Left ventricle myocardium inferior (tissue), 1 donor: ENCODE measurements at regions of chr14 and their contacts with region 1.

Region 1: DNA sequence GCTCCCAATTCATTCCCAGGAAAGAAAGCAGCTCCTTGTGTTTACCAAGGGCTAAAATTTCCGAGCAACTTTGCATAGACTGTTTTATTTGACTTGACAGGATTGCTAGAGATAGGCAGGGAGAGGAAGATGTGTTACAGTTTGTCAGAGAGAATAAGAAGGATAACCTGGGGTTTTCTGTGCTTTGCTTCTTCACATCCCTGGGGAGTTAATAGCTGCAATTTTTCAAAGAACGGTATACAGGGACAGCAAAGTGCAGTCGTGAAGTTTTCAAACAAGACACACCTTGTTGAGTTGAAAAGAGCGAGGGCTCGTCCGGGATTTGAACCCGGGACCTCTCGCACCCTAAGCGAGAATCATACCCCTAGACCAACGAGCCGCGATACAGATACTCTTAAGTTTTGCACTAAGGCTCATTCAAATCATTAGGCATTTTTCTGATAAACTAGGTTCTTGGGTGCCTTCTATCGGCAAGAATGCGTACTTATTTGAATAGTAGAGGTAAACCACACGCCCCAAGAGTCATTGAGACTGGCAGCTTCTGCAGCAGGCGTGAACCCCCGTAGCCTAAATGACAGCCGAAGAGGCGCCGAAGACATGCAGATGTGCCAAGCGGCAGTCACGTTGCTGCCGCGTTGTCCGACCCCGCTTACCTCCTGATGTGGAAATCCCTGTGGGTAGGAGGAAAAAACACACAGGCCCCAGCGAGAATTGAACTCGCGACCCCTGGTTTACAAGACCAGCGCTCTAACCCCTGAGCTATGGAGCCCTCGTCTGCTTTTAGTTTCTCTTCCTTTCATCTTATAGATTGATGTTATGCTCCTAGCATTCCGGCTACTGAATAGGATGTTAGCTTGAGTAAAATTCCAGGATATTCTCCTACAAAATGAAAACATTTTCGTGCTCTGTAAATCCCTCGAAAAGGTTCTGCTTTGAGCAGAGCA is 22.2 kb upstream of the RNASE12 start:
- DNase-seq: peak; percentile 67
- H3K4me3 ChIP-seq: peak overlapping the region; percentile 69
- H3K27ac ChIP-seq: peak overlapping the region; percentile 78
- H3K4me1 ChIP-seq: peaks cover 42% of the 10 kb centered on the region
- H3K27me3 ChIP-seq: no peaks in the 10 kb centered on the region
- CTCF ChIP-seq: peak; percentile 76

Region 2: GRCh38 chr14:20327005-20327869 is 286.1 kb before region 1 on chr14:
- intact Hi-C with region 1: loop called (anchors 5 kb)
- DNase-seq: no peak
- H3K4me3 ChIP-seq: no peak overlapping the region
- H3K27ac ChIP-seq: peak overlapping the region; percentile 30
- H3K4me1 ChIP-seq: peaks cover 42% of the 10 kb centered on the region
- H3K27me3 ChIP-seq: no peaks in the 10 kb centered on the region
- CTCF ChIP-seq: peak; percentile 84

Region 3: DNA sequence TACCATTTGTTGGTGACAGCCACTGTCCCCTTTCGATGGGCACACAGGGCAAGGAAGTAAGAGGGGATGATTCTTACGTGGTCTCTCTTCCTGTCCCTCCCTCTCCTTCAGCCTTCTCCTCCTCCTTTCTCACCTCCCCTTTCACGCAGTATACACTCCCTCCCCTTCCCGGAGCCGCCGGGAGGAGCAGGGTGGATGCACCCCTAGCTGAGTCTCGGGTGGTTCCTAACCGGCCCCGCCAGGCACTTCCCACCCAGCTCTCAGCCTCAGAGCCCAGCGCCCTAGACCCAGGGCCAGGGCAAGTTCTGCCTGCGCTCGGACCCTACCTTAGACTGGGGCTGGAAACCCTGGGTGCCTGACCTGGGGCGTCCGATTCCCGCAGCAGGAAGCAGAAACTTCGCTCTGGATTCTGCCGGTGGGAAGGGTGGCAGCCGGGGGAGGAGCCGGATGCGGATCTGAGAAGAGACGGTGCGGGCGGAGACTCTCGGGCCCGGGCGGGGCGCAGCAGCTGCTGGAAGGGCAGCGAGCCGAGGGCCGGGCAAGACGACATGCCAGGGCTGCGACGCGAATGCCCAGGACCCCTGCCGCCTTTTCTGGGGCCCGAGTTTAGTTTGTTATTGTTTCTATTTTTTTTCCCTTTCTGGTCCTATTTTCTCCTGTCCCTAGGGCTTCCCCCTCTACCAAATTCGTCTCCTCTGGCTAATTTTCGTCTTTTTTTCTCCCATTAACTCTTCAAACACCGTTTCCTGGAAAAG is 200.1 kb before region 1 on chr14 and contains the start of gene TEP1:
- intact Hi-C with region 1: loop called (anchors 10 kb)
- DNase-seq: peak; percentile 91
- H3K4me3 ChIP-seq: peak within 1 kb of the TSS; percentile 85
- H3K27ac ChIP-seq: peak within 1 kb of the TSS; percentile 97
- H3K4me1 ChIP-seq: peaks cover 23% of the 10 kb centered on the region
- H3K27me3 ChIP-seq: no peaks in the 10 kb centered on the region
- CTCF ChIP-seq: no peak
- total RNA-seq, gene TEP1: 9.7 TPM

Region 4: DNA sequence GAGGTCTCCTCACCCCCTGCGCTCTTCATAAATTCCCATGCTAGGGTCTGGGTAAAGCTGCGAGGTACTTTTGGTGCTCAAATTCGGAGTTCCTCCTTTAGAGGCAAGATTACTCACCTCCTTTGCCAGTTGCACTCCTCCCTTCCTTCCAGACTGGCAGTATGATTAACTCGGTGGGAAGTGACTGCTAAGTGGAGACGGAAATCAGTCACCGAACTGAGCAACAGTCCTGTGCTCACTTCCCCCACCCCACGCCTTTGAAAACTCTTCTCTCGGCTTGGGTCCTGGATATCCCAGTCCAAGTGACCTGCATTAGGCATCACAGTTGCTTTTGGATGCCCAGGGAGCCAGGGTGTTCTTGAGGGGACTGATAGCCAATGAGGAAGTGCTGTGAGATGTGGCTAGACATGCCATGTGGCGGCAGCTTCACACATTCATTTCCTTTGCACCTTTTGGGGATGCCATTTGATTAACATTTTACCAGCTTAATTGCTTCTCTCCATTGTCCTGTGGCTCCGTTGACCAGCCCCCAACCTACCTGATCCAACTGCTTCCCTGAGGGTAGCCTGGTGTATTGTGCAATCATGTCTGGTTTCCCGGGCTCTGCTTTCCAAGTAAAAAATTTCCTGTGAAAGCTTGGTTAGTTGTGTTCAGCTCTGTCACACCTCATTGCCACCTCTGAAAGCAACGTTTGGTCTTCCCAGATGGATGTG is 143.3 kb before region 1 on chr14:
- intact Hi-C with region 1: loop called (anchors 10 kb)
- DNase-seq: no peak
- H3K4me3 ChIP-seq: peak overlapping the region; percentile 94
- H3K27ac ChIP-seq: peak overlapping the region; percentile 92
- H3K4me1 ChIP-seq: peaks cover 46% of the 10 kb centered on the region
- H3K27me3 ChIP-seq: no peaks in the 10 kb centered on the region
- CTCF ChIP-seq: no peak

Region 5: GRCh38 chr14:20682435-20683124 is 69.2 kb after region 1 on chr14:
- intact Hi-C with region 1: loop called (anchors 5 kb)
- DNase-seq: peak; percentile 89
- H3K4me3 ChIP-seq: peak overlapping the region; percentile 87
- H3K27ac ChIP-seq: peak overlapping the region; percentile 100
- H3K4me1 ChIP-seq: peaks cover 67% of the 10 kb centered on the region
- H3K27me3 ChIP-seq: no peaks in the 10 kb centered on the region
- CTCF ChIP-seq: no peak

Region 6: DNA sequence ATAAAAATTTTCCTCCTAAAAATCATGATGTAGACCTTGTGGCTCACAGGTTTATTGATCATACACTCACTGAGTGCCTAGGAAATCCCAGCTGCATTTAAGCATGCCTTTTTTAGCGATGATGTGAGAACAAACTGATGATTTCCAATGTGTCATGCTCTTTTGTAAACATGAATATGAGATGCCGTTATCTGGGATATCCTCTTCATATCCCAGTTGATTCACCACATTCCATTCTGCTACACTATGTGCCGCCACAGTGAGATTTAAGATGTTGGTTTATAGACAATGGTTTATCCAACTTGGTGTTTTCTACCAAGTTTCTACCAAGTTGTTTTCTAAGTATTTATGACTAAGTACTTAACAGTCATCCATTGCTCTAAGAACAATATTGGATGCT is 1055.0 kb after region 1 on chr14:
- intact Hi-C with region 1: no loop called
- DNase-seq: no peak
- H3K4me3 ChIP-seq: no peak overlapping the region
- H3K27ac ChIP-seq: no peak overlapping the region
- H3K4me1 ChIP-seq: no peaks in the 10 kb centered on the region
- H3K27me3 ChIP-seq: no peaks in the 10 kb centered on the region
- CTCF ChIP-seq: no peak